Tibial artery (tissue), 4 donors: ENCODE measurements at regions of chr3 and their contacts with region 1.

Region 1: DNA sequence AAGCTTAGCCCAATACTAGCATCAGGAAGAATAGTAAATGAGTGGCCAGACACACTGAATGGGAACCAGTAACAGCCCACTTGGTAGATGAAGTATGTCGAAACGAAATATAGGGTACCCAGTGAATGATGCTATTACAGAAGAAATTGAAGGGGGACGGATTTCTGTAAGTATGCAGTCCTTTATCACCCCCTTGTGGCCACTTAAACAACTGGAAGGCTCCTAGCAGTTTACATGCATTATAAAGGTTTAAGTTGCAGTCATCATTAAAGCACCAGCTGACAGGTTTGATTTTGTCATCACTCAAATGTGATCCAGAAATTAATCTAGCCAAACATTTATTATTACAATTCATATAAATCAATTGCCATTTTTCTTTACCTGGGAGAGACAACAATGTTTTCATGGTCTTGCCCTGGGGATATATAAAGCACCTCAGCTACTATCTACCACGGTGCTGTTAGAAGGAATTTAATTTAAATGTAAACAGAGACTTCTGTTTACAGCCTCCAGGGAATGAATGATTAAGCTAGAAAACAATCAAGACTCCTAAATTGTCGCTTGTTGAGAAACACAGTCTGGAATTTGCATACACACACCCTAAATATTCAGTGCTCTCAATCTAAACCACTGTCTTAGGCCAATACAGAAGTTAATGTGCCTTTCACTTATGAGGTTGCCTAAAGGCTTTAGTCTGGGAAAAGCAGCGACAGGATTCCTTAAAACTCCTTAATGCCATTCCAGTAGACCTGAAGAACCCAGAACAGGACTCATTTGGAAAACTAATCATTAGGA is 7.8 kb downstream of the EIF1B start:
- DNase-seq: peak in 1 of 2 donors; percentile 53
- H3K4me3 ChIP-seq: no peak overlapping the region
- H3K27ac ChIP-seq: no peak overlapping the region
- H3K4me1 ChIP-seq: peaks cover 0 to 20% (median 2%) of the 10 kb centered on the region in 4 donors
- H3K27me3 ChIP-seq: no peaks in the 10 kb centered on the region
- CTCF ChIP-seq: peak; percentile 81 to 86

Region 2: GRCh38 chr3:40191850-40192448 is 125.3 kb before region 1 on chr3:
- intact Hi-C with region 1: loop called (anchors 2 kb)
- DNase-seq: peak in 1 of 2 donors; percentile 55
- H3K4me3 ChIP-seq: no peak overlapping the region
- H3K27ac ChIP-seq: no peak overlapping the region
- H3K4me1 ChIP-seq: peaks cover 0 to 17% (median 5%) of the 10 kb centered on the region in 4 donors
- H3K27me3 ChIP-seq: no peaks in the 10 kb centered on the region
- CTCF ChIP-seq: peak; percentile 67 to 94

Region 3: GRCh38 chr3:40524568-40525285 is 207.5 kb after region 1 on chr3 and contains the start of gene ZNF621:
- intact Hi-C with region 1: loop called (anchors 5 kb)
- DNase-seq: peak; percentile 92 to 96
- H3K4me3 ChIP-seq: peak within 1 kb of the TSS; percentile 60 to 94
- H3K27ac ChIP-seq: peak within 1 kb of the TSS; percentile 79 to 90
- H3K4me1 ChIP-seq: peaks cover 0 to 16% (median 7%) of the 10 kb centered on the region in 4 donors
- H3K27me3 ChIP-seq: no peaks in the 10 kb centered on the region
- CTCF ChIP-seq: no peak

Region 4: GRCh38 chr3:40810813-40811212 is 493.6 kb after region 1 on chr3:
- intact Hi-C with region 1: loop called (anchors 5 kb)
- DNase-seq: no peak
- H3K4me3 ChIP-seq: no peak overlapping the region
- H3K27ac ChIP-seq: no peak overlapping the region
- H3K4me1 ChIP-seq: no peaks in the 10 kb centered on the region
- H3K27me3 ChIP-seq: no peaks in the 10 kb centered on the region
- CTCF ChIP-seq: no peak